Sciatic nerve (tissue), 2 donors: ENCODE measurements at regions of chr7 and their contacts with region 1.

Region 1: GRCh38 chr7:106064771-106065585 is 47.1 kb downstream of the SYPL1 start:
- DNase-seq: peak; percentile 85
- ATAC-seq: peak; percentile 94

Region 2: DNA sequence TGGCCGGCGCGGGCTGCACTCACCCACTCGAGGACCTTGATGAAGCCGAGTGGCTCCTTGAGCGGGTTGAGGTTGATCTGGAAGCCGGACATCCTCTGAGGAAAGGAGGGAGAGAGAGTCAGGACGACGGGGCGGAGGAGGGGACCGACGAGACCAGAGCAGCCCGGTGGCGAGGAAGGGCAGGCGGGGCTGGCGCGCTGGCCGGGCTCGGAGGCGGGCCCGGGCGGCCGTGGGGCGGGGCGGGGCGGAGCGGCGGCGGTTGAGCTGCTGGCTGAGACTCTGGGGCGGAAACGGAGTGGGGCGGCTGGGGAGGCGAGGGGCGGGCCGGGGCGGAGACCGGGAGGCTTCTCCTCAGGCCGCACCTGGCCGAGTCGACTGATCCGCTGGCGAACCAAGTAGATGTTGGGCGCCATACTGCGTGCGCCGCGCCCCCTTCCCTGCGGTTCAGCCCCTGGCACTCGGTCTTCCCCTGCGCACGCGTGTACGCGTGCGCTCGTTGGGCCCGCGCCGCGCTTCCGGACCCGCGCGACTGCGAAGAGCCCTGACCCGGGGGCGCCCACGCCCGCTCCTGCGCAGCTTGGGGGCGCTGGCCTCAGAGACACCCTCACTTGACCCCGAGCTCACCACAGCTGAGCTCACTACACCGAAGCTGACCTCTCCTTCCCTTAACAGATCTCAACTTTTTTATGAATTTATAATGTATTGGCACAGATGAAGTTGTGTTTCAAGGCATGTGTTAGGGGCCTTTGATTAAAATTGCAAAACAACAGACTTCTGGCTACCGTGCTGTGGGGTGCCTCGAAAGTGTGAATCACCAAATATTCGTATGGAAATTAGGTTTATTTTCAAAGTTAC is 47.4 kb after region 1 on chr7 and contains the start of gene SYPL1:
- intact Hi-C with region 1: loop called (anchors 10 kb)
- DNase-seq: peak; percentile 96
- ATAC-seq: peak; percentile 96
- total RNA-seq, gene SYPL1: 83.5 TPM

Region 3: DNA sequence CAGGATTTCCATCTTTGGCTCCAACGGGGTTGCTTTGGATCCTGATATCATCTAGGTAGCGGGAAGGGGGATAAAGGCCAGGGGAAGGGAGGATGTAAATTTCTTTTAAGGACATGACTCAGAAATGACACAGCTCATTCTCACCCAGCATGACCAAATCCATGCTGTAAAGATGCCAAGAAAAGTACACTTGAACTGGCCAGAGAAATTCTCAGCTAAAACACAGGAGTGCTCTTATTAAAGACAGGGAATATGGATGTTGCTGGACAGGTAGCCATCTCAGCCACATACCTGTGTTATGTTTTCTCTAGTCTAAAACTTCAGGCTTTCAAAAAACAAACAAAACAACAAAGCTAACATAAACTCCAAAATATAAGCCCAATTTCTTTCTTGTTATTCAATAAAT is 151.5 kb after region 1 on chr7:
- intact Hi-C with region 1: no loop called
- DNase-seq: no peak
- ATAC-seq: peak; percentile 87